MCF 10A (cell line): ENCODE measurements at regions of chr7 and their contacts with region 1.

Region 1: DNA sequence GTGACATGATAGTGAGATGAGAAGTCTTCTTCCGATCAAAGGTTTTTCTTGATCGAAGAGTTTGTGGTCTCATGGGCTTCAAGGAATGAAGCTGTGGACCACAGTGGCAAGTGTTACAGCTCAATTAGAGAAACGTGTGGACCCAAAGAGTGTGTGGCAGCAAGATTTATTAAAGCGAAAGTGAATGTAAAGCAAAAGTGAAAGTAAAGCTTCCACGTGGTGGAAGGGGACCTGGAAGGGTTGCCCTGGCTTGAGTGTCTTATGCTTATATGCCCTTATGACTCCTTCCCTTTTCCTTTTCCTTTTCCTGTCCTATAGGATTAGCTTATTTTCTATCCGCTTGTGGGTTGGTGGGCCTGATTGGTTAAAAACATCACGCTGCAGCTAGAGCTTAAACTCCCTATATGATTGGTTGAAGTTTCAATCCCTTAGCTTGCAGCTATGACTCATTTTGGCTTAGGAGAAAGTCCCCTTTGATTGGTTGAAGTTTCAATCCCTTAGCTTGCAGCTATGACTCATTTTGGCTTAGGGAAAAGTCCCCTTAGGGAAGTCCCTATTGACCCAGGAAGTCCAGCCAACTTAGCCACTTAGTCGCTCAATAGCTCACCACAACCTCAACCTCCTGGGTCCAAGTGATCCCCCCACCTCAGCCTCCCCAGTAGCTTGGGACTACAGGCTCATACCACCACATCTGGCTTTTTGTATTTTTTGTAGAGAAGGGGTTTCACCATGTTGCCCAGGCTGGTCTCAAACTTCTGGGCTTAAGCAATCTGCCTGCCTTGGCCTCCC is 34.7 kb downstream of the MRPS24 start:
- DNase-seq: peak; percentile 18
- H3K4me3 Mint-ChIP-seq: no peak overlapping the region
- H3K27ac Mint-ChIP-seq: no peak overlapping the region
- H3K4me1 Mint-ChIP-seq: no peaks in the 10 kb centered on the region
- H3K27me3 Mint-ChIP-seq: peaks cover under 1% of the 10 kb centered on the region
- CTCF ChIP-seq: no peak

Region 2: DNA sequence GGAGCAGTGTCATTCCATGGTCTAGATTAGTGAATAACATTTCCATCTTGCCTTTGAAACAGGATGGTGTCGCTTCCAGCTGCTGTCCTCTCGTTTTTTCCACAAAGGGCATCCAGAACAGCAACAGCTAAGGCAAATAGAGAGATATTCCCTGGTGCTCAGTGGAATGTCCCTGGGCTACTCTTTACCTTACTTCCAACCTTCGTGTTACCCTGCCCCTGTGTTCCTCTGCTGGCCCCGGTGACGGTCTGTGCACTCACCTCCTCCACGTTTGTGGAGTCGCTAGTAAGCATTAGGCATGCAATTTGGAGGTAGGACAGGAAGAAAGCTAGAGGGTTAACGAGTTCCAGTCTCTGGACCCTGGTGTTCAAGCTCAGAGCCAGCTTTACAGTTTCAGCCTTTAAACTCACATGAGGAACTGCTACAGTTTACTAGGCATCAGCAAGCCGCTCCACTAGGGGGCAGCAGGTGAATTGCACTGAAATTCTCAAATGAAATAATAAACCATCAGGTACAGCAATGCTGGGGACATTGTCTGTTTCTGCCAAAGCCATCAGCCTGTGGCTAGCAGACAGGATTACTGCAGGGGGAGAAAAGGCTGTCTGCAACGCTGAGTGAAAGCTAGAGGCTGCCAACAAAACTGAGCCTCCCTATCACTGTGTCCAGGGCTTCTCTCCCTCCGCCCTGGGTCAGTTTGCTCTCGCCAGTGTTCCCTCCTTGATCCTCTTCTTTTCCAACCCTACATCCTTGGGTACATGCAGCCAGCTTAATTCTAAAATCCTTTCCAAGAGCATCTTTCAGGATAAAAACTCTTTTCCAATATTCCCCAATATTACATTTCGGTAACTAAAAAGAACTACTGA is 893.4 kb before region 1 on chr7:
- CTCF ChIA-PET with region 1: interaction called, 4 read pairs
- POLR2A ChIA-PET with region 1: no interaction called
- intact Hi-C with region 1: loop called (anchors 1 kb)
- DNase-seq: peak; percentile 76
- H3K4me3 Mint-ChIP-seq: no peak overlapping the region
- H3K27ac Mint-ChIP-seq: no peak overlapping the region
- H3K4me1 Mint-ChIP-seq: no peaks in the 10 kb centered on the region
- H3K27me3 Mint-ChIP-seq: no peaks in the 10 kb centered on the region
- CTCF ChIP-seq: peak; percentile 89

Region 3: GRCh38 chr7:43204081-43204480 is 630.6 kb before region 1 on chr7:
- CTCF ChIA-PET with region 1: no interaction called
- POLR2A ChIA-PET with region 1: no interaction called
- intact Hi-C with region 1: no loop called
- DNase-seq: peak; percentile 55
- H3K4me3 Mint-ChIP-seq: no peak overlapping the region
- H3K27ac Mint-ChIP-seq: no peak overlapping the region
- H3K4me1 Mint-ChIP-seq: peaks cover 5% of the 10 kb centered on the region
- H3K27me3 Mint-ChIP-seq: peaks cover 11% of the 10 kb centered on the region
- CTCF ChIP-seq: no peak

Region 4: DNA sequence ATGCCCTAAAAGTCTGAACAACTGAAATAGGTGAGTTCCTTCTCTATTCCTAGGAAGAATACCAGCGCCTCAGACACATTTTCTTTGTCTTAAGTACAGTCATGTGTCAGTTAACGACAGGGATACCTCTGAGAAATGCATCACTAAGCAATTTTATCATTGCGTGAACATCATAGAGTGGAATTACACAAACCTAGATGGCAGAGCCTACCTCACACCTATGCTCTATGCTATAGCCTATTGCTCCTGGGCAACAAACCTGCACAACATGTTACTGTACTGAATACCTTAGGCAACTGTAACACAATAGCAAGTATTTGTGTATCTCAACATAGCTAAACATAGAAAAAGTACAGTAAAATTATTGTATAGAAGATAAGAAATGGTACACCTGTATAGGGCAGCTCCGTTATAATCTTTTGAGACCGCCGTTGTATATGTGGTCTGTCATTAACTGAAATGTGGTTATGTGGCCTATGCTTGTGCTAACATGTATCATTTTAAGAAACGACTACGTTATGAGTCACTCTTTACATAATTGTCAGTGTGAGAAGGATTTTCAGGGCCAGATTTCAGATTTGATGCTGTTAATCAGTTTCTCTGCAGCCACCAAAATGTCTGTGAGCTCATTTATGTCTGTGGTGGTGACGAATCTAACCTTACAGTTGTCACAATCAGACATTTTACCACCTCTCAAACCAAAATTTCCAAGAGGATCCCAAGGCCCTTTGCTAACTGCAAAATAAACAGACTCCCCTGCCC is 317.9 kb before region 1 on chr7:
- CTCF ChIA-PET with region 1: no interaction called
- POLR2A ChIA-PET with region 1: no interaction called
- intact Hi-C with region 1: no loop called
- DNase-seq: peak; percentile 74
- H3K4me3 Mint-ChIP-seq: no peak overlapping the region
- H3K27ac Mint-ChIP-seq: no peak overlapping the region
- H3K4me1 Mint-ChIP-seq: peaks cover 5% of the 10 kb centered on the region
- H3K27me3 Mint-ChIP-seq: no peaks in the 10 kb centered on the region
- CTCF ChIP-seq: no peak

Region 5: DNA sequence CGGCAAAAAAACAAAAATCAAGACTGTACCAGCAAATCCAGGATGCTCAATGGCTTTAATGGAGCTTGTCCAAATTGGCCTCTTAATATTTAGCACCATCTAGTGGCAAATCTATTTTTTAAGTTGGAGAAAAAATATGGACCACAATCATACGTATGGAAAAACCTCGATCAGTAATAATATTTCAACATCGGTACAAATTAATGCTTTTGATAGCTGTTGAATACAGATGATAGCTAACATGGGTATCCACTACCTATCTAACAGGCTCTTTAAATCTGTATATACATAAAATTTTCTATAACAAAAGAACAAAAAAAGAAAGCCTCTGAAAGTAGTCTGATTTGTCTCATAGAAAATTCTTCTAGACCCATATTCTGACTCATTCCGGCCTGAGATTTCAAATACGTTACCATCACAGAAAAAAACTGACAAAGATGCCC is 134.6 kb before region 1 on chr7:
- CTCF ChIA-PET with region 1: interaction called, 52 read pairs
- POLR2A ChIA-PET with region 1: interaction called, 7 read pairs
- intact Hi-C with region 1: loop called (anchors 1 kb)
- DNase-seq: peak; percentile 64
- H3K4me3 Mint-ChIP-seq: no peak overlapping the region
- H3K27ac Mint-ChIP-seq: no peak overlapping the region
- H3K4me1 Mint-ChIP-seq: peaks cover 5% of the 10 kb centered on the region
- H3K27me3 Mint-ChIP-seq: no peaks in the 10 kb centered on the region
- CTCF ChIP-seq: peak; percentile 69

Region 6: GRCh38 chr7:43729214-43729923 is 105.3 kb before region 1 on chr7 and contains the start of gene COA1:
- CTCF ChIA-PET with region 1: interaction called, 26 read pairs
- POLR2A ChIA-PET with region 1: interaction called, 8 read pairs
- intact Hi-C with region 1: loop called (anchors 1 kb)
- DNase-seq: peak; percentile 89
- H3K4me3 Mint-ChIP-seq: peak within 1 kb of the TSS; percentile 87
- H3K27ac Mint-ChIP-seq: peak within 1 kb of the TSS; percentile 77
- H3K4me1 Mint-ChIP-seq: peaks cover 4% of the 10 kb centered on the region
- H3K27me3 Mint-ChIP-seq: no peaks in the 10 kb centered on the region
- CTCF ChIP-seq: no peak
- total RNA-seq, gene COA1: 65.5 and 68.5 TPM in 2 replicates

Region 7: GRCh38 chr7:43850348-43851116 is 15.9 kb after region 1 on chr7:
- CTCF ChIA-PET with region 1: interaction called, 21 read pairs
- POLR2A ChIA-PET with region 1: interaction called, 3 read pairs
- intact Hi-C with region 1: no loop called
- DNase-seq: peak; percentile 64
- H3K4me3 Mint-ChIP-seq: no peak overlapping the region
- H3K27ac Mint-ChIP-seq: no peak overlapping the region
- H3K4me1 Mint-ChIP-seq: no peaks in the 10 kb centered on the region
- H3K27me3 Mint-ChIP-seq: no peaks in the 10 kb centered on the region
- CTCF ChIP-seq: no peak